B cell (primary cell): ENCODE measurements at regions of chr2 and their contacts with region 1.

Region 1: GRCh38 chr2:42663106-42663780 is 94.8 kb downstream of the MTA3 start:
- DNase-seq: peak; percentile 78
- ATAC-seq: peak; percentile 94
- H3K4me3 ChIP-seq: peak overlapping the region in 1 of 5 experiments; percentile 2
- H3K4me3 Mint-ChIP-seq: peak overlapping the region; percentile 2
- H3K27ac ChIP-seq: peak overlapping the region in 1 of 2 donors; percentile 63
- H3K27ac Mint-ChIP-seq: peak overlapping the region; percentile 21
- H3K4me1 ChIP-seq: peaks cover 16 to 18% of the 10 kb centered on the region in 2 donors
- H3K4me1 Mint-ChIP-seq: peaks cover 15% of the 10 kb centered on the region
- H3K27me3 ChIP-seq: no peaks in the 10 kb centered on the region
- H3K27me3 Mint-ChIP-seq: no peaks in the 10 kb centered on the region
- CTCF ChIP-seq: peak; percentile 99

Region 2: GRCh38 chr2:41869542-41870264 is 793.5 kb before region 1 on chr2:
- CTCF ChIA-PET with region 1: interaction called, 9 read pairs
- POLR2A ChIA-PET with region 1: no interaction called
- intact Hi-C with region 1: loop called (anchors 1 kb)
- DNase-seq: peak; percentile 77
- ATAC-seq: peak; percentile 64
- H3K4me3 ChIP-seq: no peak overlapping the region
- H3K4me3 Mint-ChIP-seq: no peak overlapping the region
- H3K27ac ChIP-seq: no peak overlapping the region
- H3K27ac Mint-ChIP-seq: no peak overlapping the region
- H3K4me1 ChIP-seq: no peaks in the 10 kb centered on the region
- H3K4me1 Mint-ChIP-seq: no peaks in the 10 kb centered on the region
- H3K27me3 ChIP-seq: peaks cover 0 to 9% (median 0%) of the 10 kb centered on the region in 4 experiments
- H3K27me3 Mint-ChIP-seq: peaks cover 12% of the 10 kb centered on the region
- CTCF ChIP-seq: peak; percentile 90

Region 3: GRCh38 chr2:42513257-42513918 is 149.9 kb before region 1 on chr2:
- CTCF ChIA-PET with region 1: interaction called, 33 read pairs
- POLR2A ChIA-PET with region 1: interaction called, 3 read pairs
- intact Hi-C with region 1: no loop called
- DNase-seq: peak; percentile 35
- ATAC-seq: no peak
- H3K4me3 ChIP-seq: no peak overlapping the region
- H3K4me3 Mint-ChIP-seq: no peak overlapping the region
- H3K27ac ChIP-seq: no peak overlapping the region
- H3K27ac Mint-ChIP-seq: no peak overlapping the region
- H3K4me1 ChIP-seq: no peaks in the 10 kb centered on the region
- H3K4me1 Mint-ChIP-seq: peaks cover 6% of the 10 kb centered on the region
- H3K27me3 ChIP-seq: no peaks in the 10 kb centered on the region
- H3K27me3 Mint-ChIP-seq: peaks cover 5% of the 10 kb centered on the region
- CTCF ChIP-seq: peak; percentile 42

Region 4: DNA sequence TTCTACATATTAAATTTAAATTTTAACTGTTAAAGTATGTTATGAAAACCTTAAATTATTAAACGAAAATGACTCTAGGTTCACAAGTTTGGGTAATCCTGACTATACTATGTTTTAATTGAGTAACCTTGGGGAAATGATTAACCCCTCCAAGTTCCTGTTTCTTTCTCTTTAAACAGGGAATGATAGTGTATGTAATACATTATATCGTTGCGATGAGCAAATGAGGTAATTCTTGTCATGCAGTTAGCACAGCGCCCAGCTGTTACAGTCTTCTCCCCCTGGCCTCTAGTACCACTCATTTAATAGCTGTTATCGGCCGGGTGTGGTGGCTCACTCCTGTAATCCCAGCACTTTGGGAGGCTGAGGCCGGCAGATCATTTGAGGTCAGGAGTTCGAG is 14.4 kb before region 1 on chr2:
- CTCF ChIA-PET with region 1: interaction called, 14 read pairs
- POLR2A ChIA-PET with region 1: no interaction called
- intact Hi-C with region 1: no loop called
- DNase-seq: no peak
- ATAC-seq: no peak
- H3K4me3 ChIP-seq: no peak overlapping the region
- H3K4me3 Mint-ChIP-seq: no peak overlapping the region
- H3K27ac ChIP-seq: no peak overlapping the region
- H3K27ac Mint-ChIP-seq: no peak overlapping the region
- H3K4me1 ChIP-seq: no peaks in the 10 kb centered on the region
- H3K4me1 Mint-ChIP-seq: peaks cover 3% of the 10 kb centered on the region
- H3K27me3 ChIP-seq: no peaks in the 10 kb centered on the region
- H3K27me3 Mint-ChIP-seq: no peaks in the 10 kb centered on the region
- CTCF ChIP-seq: no peak

Region 5: DNA sequence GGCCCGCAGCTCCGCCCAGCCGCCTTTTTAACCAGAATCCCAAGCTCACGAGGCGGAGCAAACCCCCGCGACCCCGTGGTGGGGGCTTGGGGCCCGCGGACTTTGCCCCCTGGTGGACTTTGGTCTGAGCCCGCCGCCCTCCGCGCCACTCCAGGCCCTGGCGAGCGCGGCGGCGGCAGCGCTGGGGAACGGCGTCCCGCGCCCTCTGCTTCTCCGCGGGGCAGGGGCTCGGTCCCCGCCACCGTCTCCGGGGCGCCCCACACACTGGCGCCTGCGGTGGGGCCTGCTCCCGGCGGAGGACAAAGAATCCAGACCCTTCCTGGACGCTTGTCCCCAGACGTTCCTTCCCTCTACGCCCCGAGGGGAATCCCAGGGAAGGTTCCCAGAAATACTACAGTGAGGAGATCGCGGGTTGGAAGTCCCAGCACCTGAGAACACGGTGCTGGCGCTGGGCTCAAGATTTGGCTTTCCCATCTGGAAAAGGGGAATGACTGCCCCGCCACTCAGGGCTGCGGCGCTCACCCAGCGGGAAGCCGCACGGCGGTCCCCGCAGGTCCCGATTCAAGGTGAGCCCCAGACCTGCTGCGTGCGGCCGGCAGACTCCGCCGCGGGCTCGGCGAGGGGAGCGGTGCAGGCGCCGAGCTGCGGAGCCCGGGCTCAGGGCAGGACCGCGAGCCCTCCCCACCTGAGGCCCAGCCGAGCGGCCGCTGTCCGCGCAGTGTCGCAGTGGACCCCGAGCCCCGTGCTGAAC is 129.5 kb after region 1 on chr2 and contains the start of gene HAAO:
- CTCF ChIA-PET with region 1: interaction called, 12 read pairs
- POLR2A ChIA-PET with region 1: no interaction called
- intact Hi-C with region 1: loop called (anchors 5 kb)
- DNase-seq: peak; percentile 74
- ATAC-seq: peak; percentile 61
- H3K4me3 ChIP-seq: peak within 1 kb of the TSS; percentile 47 to 93 (median 76)
- H3K4me3 Mint-ChIP-seq: peak within 1 kb of the TSS; percentile 87
- H3K27ac ChIP-seq: peak within 1 kb of the TSS; percentile 49 to 69
- H3K27ac Mint-ChIP-seq: peak within 1 kb of the TSS; percentile 89
- H3K4me1 ChIP-seq: peaks cover 18 to 37% of the 10 kb centered on the region in 2 donors
- H3K4me1 Mint-ChIP-seq: peaks cover 46% of the 10 kb centered on the region
- H3K27me3 ChIP-seq: no peaks in the 10 kb centered on the region
- H3K27me3 Mint-ChIP-seq: no peaks in the 10 kb centered on the region
- CTCF ChIP-seq: peak; percentile 11
- total RNA-seq, gene HAAO: 17.6 and 21.0 TPM in 2 replicates